ENCODE measurements at regions of chr3 and their contacts with region 1.

Region 1: GRCh38 chr3:127455541-127456450 is 134.7 kb downstream of the TPRA1 start:
- DNase-seq: no peak
- ATAC-seq: peak; percentile 96
- H3K4me3 ChIP-seq: peak overlapping the region; percentile 30 to 54
- H3K27ac ChIP-seq: no peak overlapping the region
- H3K4me1 ChIP-seq: peaks cover 11% of the 10 kb centered on the region
- H3K27me3 ChIP-seq: no peaks in the 10 kb centered on the region; the same call in 1 of the 2 replicates
- CTCF ChIP-seq: peak; percentile 100

Region 2: GRCh38 chr3:126679318-126679751 is 776.5 kb before region 1 on chr3:
- CTCF ChIA-PET with region 1: interaction called, 5 read pairs
- POLR2A ChIA-PET with region 1: no interaction called
- in situ Hi-C with region 1: no loop called
- intact Hi-C with region 1: loop called (anchors 10 kb)
- DNase-seq: peak; percentile 60
- ATAC-seq: peak; percentile 96
- H3K4me3 ChIP-seq: no peak overlapping the region; a peak in 1 of 4 replicates
- H3K27ac ChIP-seq: no peak overlapping the region; the same call in 1 of the 2 replicates
- H3K4me1 ChIP-seq: peaks cover 13% of the 10 kb centered on the region
- H3K27me3 ChIP-seq: peaks cover 5% of the 10 kb centered on the region; the same call in 1 of the 2 replicates
- CTCF ChIP-seq: peak; percentile 98

Region 3: GRCh38 chr3:126982471-126983175 is 473.2 kb before region 1 on chr3 and contains the start of gene PLXNA1:
- CTCF ChIA-PET with region 1: interaction called, 3 read pairs
- POLR2A ChIA-PET with region 1: no interaction called
- in situ Hi-C with region 1: no loop called
- intact Hi-C with region 1: loop called (anchors 5 kb)
- DNase-seq: peak; percentile 41
- ATAC-seq: peak; percentile 88
- H3K4me3 ChIP-seq: peak within 1 kb of the TSS; percentile 64 to 75
- H3K27ac ChIP-seq: peak within 1 kb of the TSS; percentile 86
- H3K4me1 ChIP-seq: peaks cover 41% of the 10 kb centered on the region
- H3K27me3 ChIP-seq: no peaks in the 10 kb centered on the region
- CTCF ChIP-seq: peak; percentile 99
- total RNA-seq, gene PLXNA1: 80.6 TPM

Region 4: GRCh38 chr3:127254730-127255129 is 201.1 kb before region 1 on chr3:
- CTCF ChIA-PET with region 1: interaction called, 4 read pairs
- POLR2A ChIA-PET with region 1: no interaction called
- in situ Hi-C with region 1: no loop called
- intact Hi-C with region 1: loop called (anchors 10 kb)
- DNase-seq: no peak
- ATAC-seq: peak; percentile 86
- H3K4me3 ChIP-seq: no peak overlapping the region
- H3K27ac ChIP-seq: no peak overlapping the region
- H3K4me1 ChIP-seq: no peaks in the 10 kb centered on the region
- H3K27me3 ChIP-seq: no peaks in the 10 kb centered on the region; the same call in 1 of the 2 replicates
- CTCF ChIP-seq: no peak

Region 5: GRCh38 chr3:127399154-127399553 is 56.6 kb before region 1 on chr3:
- CTCF ChIA-PET with region 1: no interaction called
- POLR2A ChIA-PET with region 1: no interaction called
- in situ Hi-C with region 1: no loop called
- intact Hi-C with region 1: no loop called
- DNase-seq: no peak
- ATAC-seq: no peak
- H3K4me3 ChIP-seq: no peak overlapping the region
- H3K27ac ChIP-seq: no peak overlapping the region
- H3K4me1 ChIP-seq: peaks cover 5% of the 10 kb centered on the region; the same call in 1 of the 2 replicates
- H3K27me3 ChIP-seq: peaks cover 9% of the 10 kb centered on the region; the same call in 1 of the 2 replicates
- CTCF ChIP-seq: no peak